Activated naive CD4-positive, alpha-beta T cell treated with anti-CD3 and anti-CD28 coated beads for 36 hours (primary cell): ENCODE measurements at regions of chr7 and their contacts with region 1.

Region 1: GRCh38 chr7:151519765-151520418 is at the start of gene RHEB:
- DNase-seq: peak; percentile 99
- H3K4me3 Mint-ChIP-seq: peak within 1 kb of the TSS; percentile 98
- H3K27ac Mint-ChIP-seq: peak within 1 kb of the TSS; percentile 98
- H3K4me1 Mint-ChIP-seq: peaks cover 38% of the 10 kb centered on the region
- H3K27me3 Mint-ChIP-seq: no peaks in the 10 kb centered on the region
- total RNA-seq, gene RHEB: 58.7 to 62.7 TPM

Region 2: GRCh38 chr7:151341357-151342101 is 178.4 kb before region 1 on chr7 and contains the start of gene NUB1:
- CTCF ChIA-PET with region 1: no interaction called
- intact Hi-C with region 1: loop called (anchors 1 kb)
- DNase-seq: peak; percentile 92
- H3K4me3 Mint-ChIP-seq: peak within 1 kb of the TSS; percentile 75
- H3K27ac Mint-ChIP-seq: peak within 1 kb of the TSS; percentile 82
- H3K4me1 Mint-ChIP-seq: peaks cover 46% of the 10 kb centered on the region
- H3K27me3 Mint-ChIP-seq: no peaks in the 10 kb centered on the region
- total RNA-seq, gene NUB1: 46.6 to 50.3 TPM

Region 3: DNA sequence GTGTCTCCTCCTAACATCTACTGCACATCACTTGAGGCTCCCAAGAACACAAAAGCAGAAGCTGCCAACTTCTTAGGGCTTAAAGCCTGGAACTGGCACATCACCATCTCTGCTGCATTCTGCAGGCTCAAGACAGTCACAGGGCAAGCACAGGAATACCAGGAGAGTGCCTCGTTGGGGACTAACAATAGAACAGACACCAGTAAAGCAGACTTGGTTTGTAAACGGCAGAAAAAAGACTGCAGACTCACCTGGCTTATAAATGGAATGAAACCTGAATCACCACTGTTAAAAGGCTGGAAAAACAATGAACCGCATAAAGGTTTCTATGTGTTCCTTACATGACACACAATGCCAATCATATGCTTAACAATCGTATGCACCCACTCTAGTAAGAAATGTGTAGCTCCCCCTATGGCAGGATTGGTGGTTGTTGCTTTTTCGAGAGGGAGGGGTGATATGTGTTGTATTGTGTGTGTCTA is 12.9 kb before region 1 on chr7:
- CTCF ChIA-PET with region 1: interaction called, 3 read pairs
- intact Hi-C with region 1: loop called (anchors 1 kb)
- DNase-seq: no peak
- H3K4me3 Mint-ChIP-seq: no peak overlapping the region
- H3K27ac Mint-ChIP-seq: no peak overlapping the region
- H3K4me1 Mint-ChIP-seq: peaks cover 52% of the 10 kb centered on the region
- H3K27me3 Mint-ChIP-seq: no peaks in the 10 kb centered on the region

Region 4: DNA sequence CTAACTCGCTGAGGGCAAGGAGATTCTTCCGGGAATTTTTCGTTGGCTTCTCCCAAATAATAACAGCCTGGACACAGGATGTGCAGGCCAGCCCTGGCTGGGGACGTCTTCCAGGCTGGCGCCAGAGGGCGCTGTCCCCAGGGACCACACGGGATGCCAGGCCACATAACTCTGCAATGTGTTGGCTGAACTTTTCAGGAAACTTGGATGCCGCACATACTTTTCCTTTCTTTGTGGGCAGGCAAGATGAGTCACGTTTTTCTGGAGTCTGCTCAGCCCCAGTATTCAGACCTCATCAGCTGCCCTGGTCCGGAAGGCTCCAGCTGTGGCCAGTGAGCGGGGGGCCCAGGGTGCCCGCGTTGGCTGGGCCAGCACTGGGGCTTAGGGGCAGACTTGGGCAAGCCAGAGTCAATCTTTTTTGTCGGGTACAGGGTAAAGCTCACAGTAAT is 234.3 kb after region 1 on chr7:
- CTCF ChIA-PET with region 1: interaction called, 3 read pairs
- intact Hi-C with region 1: loop called (anchors 2 kb)
- DNase-seq: peak; percentile 32
- H3K4me3 Mint-ChIP-seq: no peak overlapping the region
- H3K27ac Mint-ChIP-seq: no peak overlapping the region
- H3K4me1 Mint-ChIP-seq: peaks cover 18% of the 10 kb centered on the region
- H3K27me3 Mint-ChIP-seq: no peaks in the 10 kb centered on the region

Region 5: DNA sequence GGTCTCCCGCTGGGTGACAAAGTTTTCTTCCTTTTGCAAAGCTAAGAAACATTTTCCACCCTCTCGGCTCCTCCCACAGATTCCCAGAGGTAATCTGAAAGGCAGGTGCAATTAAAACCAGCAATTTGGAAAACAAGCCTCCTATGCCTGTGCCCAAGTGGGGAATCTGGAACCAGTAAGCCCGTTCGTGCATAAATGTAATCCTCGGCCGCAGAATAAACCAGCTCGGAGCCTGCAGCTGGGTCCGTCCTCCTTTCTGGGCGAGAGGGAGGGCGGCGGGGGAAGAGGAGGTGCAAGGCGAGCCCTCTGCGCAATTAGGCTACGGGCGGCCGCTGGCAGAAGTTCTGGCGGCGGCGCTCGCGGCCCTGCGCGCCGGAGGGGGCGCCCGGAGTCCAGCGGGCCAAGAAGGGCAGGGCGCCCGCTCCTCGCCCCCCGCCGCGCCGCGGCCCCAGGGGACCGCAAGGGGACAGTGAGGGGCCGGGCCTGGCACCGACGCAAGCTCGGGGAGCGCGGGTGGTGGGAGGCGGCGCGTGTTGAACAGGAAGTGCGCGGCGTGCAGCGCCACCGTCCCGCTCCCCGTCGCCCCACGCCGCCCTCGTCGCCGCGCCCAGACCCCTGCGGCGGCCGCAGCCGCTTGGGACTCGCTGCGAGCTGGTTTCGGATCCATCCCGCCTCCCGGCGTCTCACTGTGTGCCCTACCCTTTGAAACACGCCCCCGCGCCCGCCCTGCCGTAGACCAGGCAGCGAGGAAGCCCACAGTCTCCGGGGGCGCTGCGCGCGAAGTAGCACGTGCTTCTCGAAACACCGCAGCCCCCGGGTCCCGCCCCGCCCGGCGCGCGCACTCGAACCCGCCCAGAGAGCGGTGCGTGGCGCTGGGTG is 357.2 kb after region 1 on chr7 and contains the start of gene PRKAG2:
- CTCF ChIA-PET with region 1: no interaction called
- intact Hi-C with region 1: loop called (anchors 1 kb)
- DNase-seq: peak; percentile 63
- H3K4me3 Mint-ChIP-seq: peak within 1 kb of the TSS; percentile 96
- H3K27ac Mint-ChIP-seq: peak within 1 kb of the TSS; percentile 81
- H3K4me1 Mint-ChIP-seq: peaks cover 10% of the 10 kb centered on the region
- H3K27me3 Mint-ChIP-seq: no peaks in the 10 kb centered on the region
- total RNA-seq, gene PRKAG2: 16.9 to 18.7 TPM

Region 6: GRCh38 chr7:152025077-152025936 is 505.4 kb after region 1 on chr7 and contains the start of gene GALNT11:
- CTCF ChIA-PET with region 1: no interaction called
- intact Hi-C with region 1: loop called (anchors 1 kb)
- DNase-seq: peak; percentile 81
- H3K4me3 Mint-ChIP-seq: peak within 1 kb of the TSS; percentile 80
- H3K27ac Mint-ChIP-seq: peak within 1 kb of the TSS; percentile 77
- H3K4me1 Mint-ChIP-seq: peaks cover 30% of the 10 kb centered on the region
- H3K27me3 Mint-ChIP-seq: no peaks in the 10 kb centered on the region
- total RNA-seq, gene GALNT11: 15.6 to 19.8 TPM